Right ventricle myocardium inferior (tissue), 1 donor: ENCODE measurements at regions of chrX and their contacts with region 1.

Region 1: DNA sequence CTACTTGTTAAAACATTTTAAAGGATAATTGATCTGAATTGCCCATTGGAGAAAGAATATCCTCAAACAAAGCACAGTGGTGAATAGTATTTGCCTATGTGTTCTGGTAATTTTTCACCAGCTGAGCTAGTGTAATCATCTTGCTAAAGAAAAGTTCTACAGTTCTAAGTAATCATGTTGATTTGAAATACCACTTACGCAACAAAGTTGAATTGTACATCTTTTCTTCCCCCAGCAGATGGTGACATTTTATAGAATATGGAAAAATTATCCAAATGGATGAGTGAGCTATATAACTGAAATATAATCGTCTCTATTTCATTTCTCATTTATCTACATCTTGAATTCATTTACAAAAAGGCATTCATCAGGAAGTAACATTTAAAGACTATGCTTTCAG is 9.7 kb upstream of the ZNF674 start:
- DNase-seq: no peak
- ATAC-seq: no peak

Region 2: GRCh38 chrX:46310815-46311497 is 244.0 kb before region 1 on chrX:
- intact Hi-C with region 1: no loop called
- DNase-seq: no peak
- ATAC-seq: no peak

Region 3: DNA sequence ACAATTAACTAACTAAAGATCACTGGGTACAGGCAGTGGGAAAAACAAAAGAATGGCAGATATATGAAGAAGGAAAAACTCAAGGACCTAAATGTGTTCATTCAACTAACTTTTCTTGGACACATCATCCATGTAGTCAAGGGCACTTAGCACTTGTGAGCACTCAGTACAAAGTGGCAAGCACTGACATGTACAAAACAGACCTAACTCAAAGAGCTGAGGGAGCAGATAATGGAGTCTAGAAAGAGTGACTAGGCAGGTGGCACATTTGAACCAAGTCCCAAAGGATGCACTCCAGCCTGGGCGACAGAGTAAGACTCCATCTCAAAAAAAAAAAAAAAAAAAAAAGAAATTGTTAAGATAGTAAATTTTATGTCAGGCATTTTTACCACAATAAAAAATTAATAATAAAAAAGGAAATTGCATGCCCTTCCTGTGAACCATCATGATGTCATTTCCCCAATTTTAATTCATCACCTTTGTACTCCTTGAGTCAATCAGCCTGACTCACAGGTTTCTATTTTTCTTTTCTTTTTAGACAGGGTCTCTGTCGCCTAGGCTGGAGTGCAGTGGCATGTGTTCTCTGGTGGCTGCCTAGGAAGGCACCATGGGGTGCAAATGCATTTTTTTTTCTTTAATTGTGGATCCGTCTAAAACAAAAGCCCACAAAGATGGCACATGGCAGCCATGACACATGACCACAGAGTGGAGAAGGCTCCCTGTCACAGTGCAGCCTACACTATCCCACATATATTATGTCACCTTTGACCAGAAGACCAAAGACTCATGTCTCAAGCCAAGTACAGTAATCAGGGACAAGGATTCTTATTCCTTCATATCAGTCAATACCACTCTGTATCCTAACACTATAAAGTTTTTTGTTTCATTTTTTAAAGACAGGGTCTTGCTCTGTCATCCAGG is 110.5 kb after region 1 on chrX:
- intact Hi-C with region 1: no loop called
- DNase-seq: no peak
- ATAC-seq: no peak

Region 4: GRCh38 chrX:46686003-46686645 is 131.2 kb after region 1 on chrX:
- intact Hi-C with region 1: loop called (anchors 5 kb)
- DNase-seq: no peak
- ATAC-seq: no peak